Activated naive CD4-positive, alpha-beta T cell treated with anti-CD3 and anti-CD28 coated beads for 36 hours (primary cell): ENCODE measurements at regions of chr2 and their contacts with region 1.

Region 1: GRCh38 chr2:177239932-177240630 is 24.4 kb downstream of the NFE2L2 start:
- DNase-seq: peak; percentile 63
- H3K4me3 Mint-ChIP-seq: peak overlapping the region; percentile 23
- H3K27ac Mint-ChIP-seq: peak overlapping the region; percentile 79
- H3K4me1 Mint-ChIP-seq: peaks cover 78% of the 10 kb centered on the region
- H3K27me3 Mint-ChIP-seq: no peaks in the 10 kb centered on the region

Region 2: GRCh38 chr2:177229448-177230242 is 10.4 kb before region 1 on chr2:
- CTCF ChIA-PET with region 1: interaction called, 6 read pairs
- intact Hi-C with region 1: loop called (anchors 1 kb)
- DNase-seq: no peak
- H3K4me3 Mint-ChIP-seq: no peak overlapping the region
- H3K27ac Mint-ChIP-seq: peak overlapping the region; percentile 80
- H3K4me1 Mint-ChIP-seq: peaks cover 41% of the 10 kb centered on the region
- H3K27me3 Mint-ChIP-seq: no peaks in the 10 kb centered on the region

Region 3: DNA sequence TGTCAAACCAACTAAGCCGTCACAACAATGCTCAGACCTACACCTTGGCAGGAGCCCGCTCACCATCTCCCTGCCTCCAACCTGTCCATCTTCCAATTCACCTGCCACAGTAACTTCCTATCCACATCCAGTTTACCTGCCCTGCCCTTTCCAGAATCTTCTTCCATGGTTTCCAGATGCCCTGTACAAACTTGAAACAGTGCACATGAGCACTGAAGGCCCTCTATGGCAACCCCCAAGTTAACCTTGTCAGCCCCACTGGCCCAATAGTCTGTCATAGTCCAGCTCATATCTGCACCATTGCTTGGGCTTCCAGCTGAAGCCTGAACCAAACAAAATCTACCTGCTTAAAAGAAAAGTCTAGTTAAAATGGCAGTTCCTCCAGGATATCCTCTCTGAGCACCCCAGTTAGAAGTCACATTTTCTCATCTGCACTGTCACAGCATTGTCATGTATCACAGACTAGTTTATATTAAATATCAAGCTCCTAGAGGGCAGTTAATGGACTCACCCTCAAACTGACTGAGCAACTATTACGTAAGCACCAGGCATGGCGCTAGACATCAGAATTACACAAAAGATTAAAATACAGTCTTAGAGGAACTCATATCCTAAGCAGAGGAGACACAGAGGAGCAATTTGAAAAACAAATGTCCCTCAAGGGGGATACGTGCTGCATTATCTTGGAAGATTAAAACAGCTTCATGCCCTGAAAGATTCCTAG is 12.9 kb after region 1 on chr2:
- CTCF ChIA-PET with region 1: interaction called, 5 read pairs
- intact Hi-C with region 1: loop called (anchors 1 kb)
- DNase-seq: no peak
- H3K4me3 Mint-ChIP-seq: no peak overlapping the region
- H3K27ac Mint-ChIP-seq: peak overlapping the region; percentile 88
- H3K4me1 Mint-ChIP-seq: peaks cover 88% of the 10 kb centered on the region
- H3K27me3 Mint-ChIP-seq: no peaks in the 10 kb centered on the region